K562 (cell line): ENCODE measurements at regions of chr3 and their contacts with region 1.

Region 1: DNA sequence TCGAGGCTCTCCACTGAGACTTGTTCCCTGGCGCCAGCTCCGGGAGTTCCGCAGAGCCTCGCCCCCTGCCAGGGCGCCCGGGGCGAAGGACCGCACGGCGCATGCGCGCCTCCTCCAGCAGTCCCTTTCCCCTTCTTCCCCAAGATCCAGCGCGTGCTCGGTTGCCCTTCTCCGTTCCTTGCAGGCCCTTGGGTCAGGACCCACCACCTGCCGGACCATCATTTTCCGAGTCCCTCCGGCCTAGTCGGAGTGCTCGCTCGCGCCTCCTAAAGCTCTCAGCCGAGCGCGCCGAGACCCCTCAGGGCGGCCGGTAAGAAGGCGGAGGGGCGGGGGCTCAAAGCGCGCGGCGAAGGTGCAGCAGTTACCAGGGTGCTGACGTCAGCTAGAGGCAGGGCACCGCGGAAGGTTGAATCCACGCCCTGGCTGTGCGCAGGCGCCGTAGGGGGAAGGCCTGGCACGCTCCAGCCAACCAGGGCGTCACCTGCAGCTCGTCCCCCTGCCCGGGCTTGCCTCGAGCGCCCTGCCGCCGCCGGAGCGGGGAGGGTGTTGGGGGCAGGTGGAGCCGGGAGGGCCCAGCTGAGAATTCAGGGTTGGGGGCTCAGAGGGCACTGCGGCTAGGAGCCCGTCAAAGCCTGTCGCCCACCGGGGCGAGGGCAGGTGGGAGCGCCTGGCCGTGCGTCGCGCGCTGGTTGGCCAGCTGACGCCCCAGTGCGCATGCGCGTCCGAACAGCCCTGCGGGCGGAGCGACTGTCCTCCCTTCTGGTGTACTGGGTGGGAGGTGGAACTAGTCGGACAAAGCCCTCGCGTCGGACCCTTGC is at the start of gene TCAIM:
- DNase-seq: peak; percentile 99
- ATAC-seq: peak; percentile 97
- H3K4me3 ChIP-seq: peak within 1 kb of the TSS; percentile 65
- H3K27ac ChIP-seq: peak within 1 kb of the TSS; percentile 93
- H3K4me1 ChIP-seq: peaks cover 10 to 12% of the 10 kb centered on the region in 2 experiments; a peak in 3 of 5 replicates
- H3K27me3 ChIP-seq: no peaks in the 10 kb centered on the region
- CTCF ChIP-seq: 0 out of 6 replicates have a peak, but pooled peaks of 1 of the 3 experiments have one; percentile 5
- EP300 ChIP-seq: no peak
- POLR2A ChIP-seq: peak; percentile 97
- RAD21 ChIP-seq: no peak
- polyA plus RNA-seq, gene TCAIM: 41.5 to 44.9 TPM

Region 2: DNA sequence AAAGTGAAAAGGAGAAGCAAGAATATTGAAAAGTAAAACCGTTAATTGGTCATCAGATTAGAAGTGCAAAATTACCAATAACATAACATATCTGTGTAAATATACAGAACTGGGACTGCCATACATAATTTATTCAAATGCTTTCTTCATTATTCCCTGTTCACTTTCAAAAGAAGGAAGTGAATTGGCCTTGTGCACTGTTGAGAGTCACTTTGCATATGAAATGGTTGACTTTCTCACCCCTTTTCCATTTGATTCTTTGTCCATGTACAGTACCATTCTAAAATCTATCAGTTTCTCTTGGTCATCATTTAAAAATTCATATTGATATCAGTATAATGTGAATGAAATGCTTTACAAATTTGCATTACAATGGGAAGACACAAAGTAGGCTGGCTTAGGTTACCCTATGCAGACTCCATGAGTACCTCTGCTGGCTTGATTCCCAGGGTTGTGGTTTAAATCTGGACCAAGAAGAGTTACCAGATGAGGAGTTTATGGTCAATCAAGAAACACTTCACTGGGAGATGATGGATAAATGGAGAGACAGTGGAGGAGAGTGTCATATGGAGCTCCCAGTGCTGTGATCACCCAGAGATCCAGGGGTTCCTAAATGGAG is 307.4 kb before region 1 on chr3:
- CTCF ChIA-PET with region 1: no interaction called
- POLR2A ChIA-PET with region 1: no interaction called
- in situ Hi-C with region 1: no loop called
- intact Hi-C with region 1: no loop called
- DNase-seq: no peak
- ATAC-seq: no peak
- H3K4me3 ChIP-seq: no peak overlapping the region
- H3K27ac ChIP-seq: no peak overlapping the region
- H3K4me1 ChIP-seq: no peaks in the 10 kb centered on the region
- H3K27me3 ChIP-seq: peaks cover 5 to 58% of the 10 kb centered on the region in 2 experiments; a peak in 4 of 5 replicates
- CTCF ChIP-seq: no peak
- EP300 ChIP-seq: no peak
- POLR2A ChIP-seq: no peak
- RAD21 ChIP-seq: no peak

Region 3: GRCh38 chr3:44516230-44516629 is 178.0 kb after region 1 on chr3:
- CTCF ChIA-PET with region 1: no interaction called
- POLR2A ChIA-PET with region 1: interaction called, 6 read pairs
- in situ Hi-C with region 1: no loop called
- intact Hi-C with region 1: loop called (anchors 5 kb)
- DNase-seq: no peak
- ATAC-seq: no peak
- H3K4me3 ChIP-seq: no peak overlapping the region
- H3K27ac ChIP-seq: no peak overlapping the region
- H3K4me1 ChIP-seq: peaks cover 12 to 22% of the 10 kb centered on the region in 2 experiments
- H3K27me3 ChIP-seq: no peaks in the 10 kb centered on the region
- CTCF ChIP-seq: no peak
- EP300 ChIP-seq: no peak
- POLR2A ChIP-seq: no peak
- RAD21 ChIP-seq: no peak

Region 4: GRCh38 chr3:44976002-44976815 is 638.0 kb after region 1 on chr3 and contains the starts of genes EXOSC7 and ZDHHC3:
- CTCF ChIA-PET with region 1: no interaction called
- POLR2A ChIA-PET with region 1: interaction called, 10 read pairs
- in situ Hi-C with region 1: no loop called
- intact Hi-C with region 1: no loop called
- DNase-seq: peak; percentile 94 to 98 (median 96)
- ATAC-seq: peak; percentile 80
- H3K4me3 ChIP-seq: peak within 1 kb of the TSS; percentile 94
- H3K27ac ChIP-seq: peak within 1 kb of the TSS; percentile 91
- H3K4me1 ChIP-seq: peaks cover 14 to 41% of the 10 kb centered on the region in 2 experiments
- H3K27me3 ChIP-seq: no peaks in the 10 kb centered on the region
- CTCF ChIP-seq: no peak
- EP300 ChIP-seq: no peak
- POLR2A ChIP-seq: peak; percentile 92
- RAD21 ChIP-seq: no peak
- polyA plus RNA-seq, gene EXOSC7: 236 to 237 TPM
- polyA plus RNA-seq, gene ZDHHC3: 10.3 to 11.5 TPM